T-cell (primary cell): ENCODE measurements at regions of chr12 and their contacts with region 1.

Region 1: DNA sequence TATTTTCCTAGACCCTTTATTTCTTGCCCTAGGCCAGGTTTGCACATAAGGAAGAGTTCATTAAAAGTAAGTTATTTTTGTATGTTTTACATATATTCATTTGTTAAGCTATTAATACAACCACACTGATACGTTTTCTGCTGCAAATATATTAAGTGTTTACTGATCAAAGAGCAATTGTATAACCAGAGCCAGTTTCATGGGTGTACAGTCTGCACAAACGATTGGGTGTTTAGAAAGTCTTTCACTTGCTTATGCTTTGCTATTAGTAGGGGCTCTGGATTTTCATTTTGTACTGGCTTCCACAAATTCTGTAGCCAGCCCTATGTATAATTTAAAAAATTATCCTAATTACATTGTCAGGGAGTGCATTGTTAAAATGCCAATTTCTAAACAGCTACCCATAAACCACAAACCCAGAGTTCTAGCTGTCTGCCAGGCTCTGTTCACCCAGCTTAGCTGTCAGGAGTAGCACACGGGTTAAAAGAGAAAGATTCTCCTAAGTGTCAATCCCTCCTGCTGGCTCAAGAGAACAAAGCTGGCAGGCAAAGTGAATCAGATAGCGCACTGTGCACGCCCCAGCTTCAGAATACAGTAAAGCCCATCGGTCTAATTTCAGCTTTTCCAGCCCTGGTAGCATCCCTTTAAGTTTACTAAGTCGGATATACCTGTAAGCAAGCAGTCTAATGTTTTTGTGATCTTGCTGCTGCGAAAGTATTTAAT is 151.0 kb upstream of the LMO3 start:
- DNase-seq: no peak
- ATAC-seq: no peak
- H3K4me3 ChIP-seq: no peak overlapping the region
- H3K4me3 Mint-ChIP-seq: no peak overlapping the region
- H3K27ac ChIP-seq: no peak overlapping the region
- H3K27ac Mint-ChIP-seq: no peak overlapping the region
- H3K4me1 ChIP-seq: no peaks in the 10 kb centered on the region
- H3K4me1 Mint-ChIP-seq: no peaks in the 10 kb centered on the region
- H3K27me3 ChIP-seq: no peaks in the 10 kb centered on the region
- H3K27me3 Mint-ChIP-seq: no peaks in the 10 kb centered on the region

Region 2: DNA sequence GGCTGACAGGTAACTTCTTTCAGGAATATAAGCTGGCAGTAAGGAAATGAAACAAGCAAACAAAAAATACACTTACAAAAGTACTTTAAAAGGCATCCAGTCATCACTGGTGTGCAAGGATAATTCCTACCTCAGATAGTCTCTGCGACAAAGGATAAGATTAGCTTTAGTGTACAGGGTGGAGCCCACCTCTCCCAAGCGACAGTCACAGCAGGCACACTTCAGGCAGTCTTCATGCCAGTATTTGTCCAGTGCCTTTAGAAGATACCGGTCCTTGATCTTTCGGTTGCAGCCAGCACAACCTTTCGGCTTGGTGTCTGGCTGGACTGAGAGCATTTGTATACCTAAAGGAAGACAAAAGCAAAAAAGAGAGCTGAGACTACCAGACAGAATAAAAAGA is 156.5 kb before region 1 on chr12:
- CTCF ChIA-PET with region 1: no interaction called
- POLR2A ChIA-PET with region 1: interaction called in 1 of 2 experiments, 12 read pairs
- DNase-seq: no peak
- ATAC-seq: no peak
- H3K4me3 ChIP-seq: no peak overlapping the region
- H3K4me3 Mint-ChIP-seq: no peak overlapping the region
- H3K27ac ChIP-seq: no peak overlapping the region
- H3K27ac Mint-ChIP-seq: no peak overlapping the region
- H3K4me1 ChIP-seq: no peaks in the 10 kb centered on the region
- H3K4me1 Mint-ChIP-seq: no peaks in the 10 kb centered on the region
- H3K27me3 ChIP-seq: peaks cover 2 to 6% of the 10 kb centered on the region in 2 experiments
- H3K27me3 Mint-ChIP-seq: peaks cover 5 to 14% of the 10 kb centered on the region in 2 donors

Region 3: GRCh38 chr12:16788506-16789203 is 31.7 kb after region 1 on chr12:
- CTCF ChIA-PET with region 1: no interaction called
- POLR2A ChIA-PET with region 1: interaction called in 1 of 2 experiments, 13 read pairs
- DNase-seq: no peak
- ATAC-seq: no peak
- H3K4me3 ChIP-seq: no peak overlapping the region
- H3K4me3 Mint-ChIP-seq: no peak overlapping the region
- H3K27ac ChIP-seq: no peak overlapping the region
- H3K27ac Mint-ChIP-seq: no peak overlapping the region
- H3K4me1 ChIP-seq: no peaks in the 10 kb centered on the region
- H3K4me1 Mint-ChIP-seq: no peaks in the 10 kb centered on the region
- H3K27me3 ChIP-seq: no peaks in the 10 kb centered on the region
- H3K27me3 Mint-ChIP-seq: no peaks in the 10 kb centered on the region